Naive thymus-derived CD8-positive, alpha-beta T cell (primary cell): ENCODE measurements at regions of chr2 and their contacts with region 1.

Region 1: DNA sequence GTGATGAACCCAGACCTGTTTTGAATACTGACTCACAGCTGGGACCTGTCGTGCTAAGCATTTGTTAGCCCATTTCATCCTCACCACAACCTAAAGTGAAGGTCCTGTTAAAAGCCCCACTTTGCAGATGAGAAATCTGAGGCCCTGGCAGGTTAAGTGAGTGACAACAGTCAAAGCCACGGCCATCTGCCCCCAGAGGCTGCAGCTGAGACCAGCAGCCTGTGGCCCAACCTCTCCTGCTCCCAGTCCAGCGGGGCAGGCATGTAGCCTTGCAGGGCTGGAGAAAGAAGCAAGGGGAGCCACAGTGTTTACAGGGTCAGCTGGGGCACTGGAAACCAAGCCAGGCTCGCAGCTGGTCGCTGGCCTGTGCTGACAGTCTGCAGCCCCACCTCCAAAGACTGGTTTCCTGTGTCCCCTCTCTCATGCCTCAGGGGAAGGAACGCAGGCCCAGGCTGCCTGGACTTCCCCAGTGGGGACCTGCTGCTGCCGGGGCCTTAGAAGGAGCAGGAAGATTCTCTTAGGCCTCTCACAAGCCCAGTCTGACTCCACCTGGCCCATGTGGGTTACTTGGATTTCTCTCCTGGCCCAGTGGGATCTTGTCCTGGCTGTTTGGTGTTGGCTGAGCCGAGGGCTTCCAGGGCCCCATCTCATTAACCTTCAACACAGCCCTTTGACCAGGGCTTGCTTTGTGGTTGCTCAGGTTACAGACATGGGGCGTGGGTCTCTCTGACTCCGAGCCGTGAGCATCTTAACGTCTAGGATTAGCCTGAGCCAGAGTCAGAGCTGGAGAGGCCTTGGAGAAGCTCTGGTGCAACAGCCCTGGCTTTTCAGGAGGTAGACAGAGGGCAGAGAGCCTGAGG is 1.7 kb downstream of the INPP5D start:
- DNase-seq: peak in 1 of 10 donors; percentile 15
- ATAC-seq: peak in 1 of 2 donors; percentile 5
- H3K4me3 Mint-ChIP-seq: peak overlapping the region; percentile 89 to 99 (median 94)
- H3K27ac Mint-ChIP-seq: peak overlapping the region; percentile 92 to 99 (median 98)
- H3K4me1 Mint-ChIP-seq: peaks cover 31 to 63% (median 55%) of the 10 kb centered on the region in 4 donors
- H3K27me3 Mint-ChIP-seq: no peaks in the 10 kb centered on the region

Region 2: GRCh38 chr2:232871835-232872736 is 189.7 kb before region 1 on chr2:
- POLR2A ChIA-PET with region 1: no interaction called
- DNase-seq: peak in 1 of 10 donors; percentile 42
- ATAC-seq: no peak
- H3K4me3 Mint-ChIP-seq: no peak overlapping the region
- H3K27ac Mint-ChIP-seq: no peak overlapping the region
- H3K4me1 Mint-ChIP-seq: peaks cover 5 to 10% (median 6%) of the 10 kb centered on the region in 4 donors
- H3K27me3 Mint-ChIP-seq: peaks cover 2 to 20% (median 11%) of the 10 kb centered on the region in 5 donors

Region 3: GRCh38 chr2:233049194-233049761 is 12.5 kb before region 1 on chr2:
- POLR2A ChIA-PET with region 1: interaction called, 12 read pairs
- DNase-seq: peak in 1 of 10 donors; percentile 11
- ATAC-seq: peak in 1 of 2 donors; percentile 33
- H3K4me3 Mint-ChIP-seq: no peak overlapping the region
- H3K27ac Mint-ChIP-seq: peak overlapping the region in 2 of 10 donors; percentile 31 to 70
- H3K4me1 Mint-ChIP-seq: peaks cover 7 to 15% (median 14%) of the 10 kb centered on the region in 4 donors
- H3K27me3 Mint-ChIP-seq: peaks cover 0 to 4% (median 0%) of the 10 kb centered on the region in 5 donors

Region 4: GRCh38 chr2:233075966-233076339 is 14.1 kb after region 1 on chr2:
- POLR2A ChIA-PET with region 1: interaction called, 175 read pairs
- DNase-seq: peak in 5 of 10 donors; percentile 38 to 67 (median 63)
- ATAC-seq: peak; percentile 80 to 86
- H3K4me3 Mint-ChIP-seq: no peak overlapping the region
- H3K27ac Mint-ChIP-seq: no peak overlapping the region
- H3K4me1 Mint-ChIP-seq: peaks cover 22 to 49% (median 38%) of the 10 kb centered on the region in 4 donors
- H3K27me3 Mint-ChIP-seq: no peaks in the 10 kb centered on the region

Region 5: GRCh38 chr2:233100192-233100998 is 38.6 kb after region 1 on chr2:
- POLR2A ChIA-PET with region 1: interaction called, 40 read pairs
- DNase-seq: peak in 9 of 10 donors; percentile 50 to 87 (median 73)
- ATAC-seq: peak; percentile 85 to 95
- H3K4me3 Mint-ChIP-seq: peak overlapping the region; percentile 61 to 86 (median 79)
- H3K27ac Mint-ChIP-seq: peak overlapping the region; percentile 56 to 95 (median 84)
- H3K4me1 Mint-ChIP-seq: peaks cover 43 to 89% (median 77%) of the 10 kb centered on the region in 4 donors
- H3K27me3 Mint-ChIP-seq: no peaks in the 10 kb centered on the region

Region 6: DNA sequence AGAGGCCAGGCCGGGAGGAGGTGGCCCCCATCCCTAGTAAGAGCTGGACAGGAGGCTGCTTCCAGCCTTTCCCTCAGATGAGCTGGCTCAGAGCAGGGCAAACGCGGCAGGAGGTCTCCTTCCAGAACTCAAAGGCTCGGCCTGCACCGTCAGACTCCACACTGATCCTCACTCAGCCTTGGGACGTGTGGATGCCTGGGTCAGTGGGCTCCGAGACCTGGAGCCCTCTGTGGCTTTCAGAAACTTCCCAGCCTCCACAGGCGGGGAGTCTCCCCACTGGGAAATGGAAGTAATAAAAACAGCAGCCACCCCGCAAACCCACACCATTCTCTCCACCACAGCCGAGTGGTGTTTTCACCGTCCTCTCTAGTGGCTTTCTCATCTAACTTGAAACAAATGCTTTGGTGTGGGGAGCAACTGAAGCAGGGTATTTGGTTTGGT is 52.6 kb after region 1 on chr2:
- POLR2A ChIA-PET with region 1: interaction called, 16 read pairs
- DNase-seq: peak in 7 of 10 donors; percentile 19 to 74 (median 52)
- ATAC-seq: peak; percentile 89 to 96
- H3K4me3 Mint-ChIP-seq: peak overlapping the region; percentile 24 to 77 (median 60)
- H3K27ac Mint-ChIP-seq: peak overlapping the region in 9 of 10 donors; percentile 17 to 84 (median 69)
- H3K4me1 Mint-ChIP-seq: peaks cover 45 to 89% (median 79%) of the 10 kb centered on the region in 4 donors
- H3K27me3 Mint-ChIP-seq: no peaks in the 10 kb centered on the region

Region 7: DNA sequence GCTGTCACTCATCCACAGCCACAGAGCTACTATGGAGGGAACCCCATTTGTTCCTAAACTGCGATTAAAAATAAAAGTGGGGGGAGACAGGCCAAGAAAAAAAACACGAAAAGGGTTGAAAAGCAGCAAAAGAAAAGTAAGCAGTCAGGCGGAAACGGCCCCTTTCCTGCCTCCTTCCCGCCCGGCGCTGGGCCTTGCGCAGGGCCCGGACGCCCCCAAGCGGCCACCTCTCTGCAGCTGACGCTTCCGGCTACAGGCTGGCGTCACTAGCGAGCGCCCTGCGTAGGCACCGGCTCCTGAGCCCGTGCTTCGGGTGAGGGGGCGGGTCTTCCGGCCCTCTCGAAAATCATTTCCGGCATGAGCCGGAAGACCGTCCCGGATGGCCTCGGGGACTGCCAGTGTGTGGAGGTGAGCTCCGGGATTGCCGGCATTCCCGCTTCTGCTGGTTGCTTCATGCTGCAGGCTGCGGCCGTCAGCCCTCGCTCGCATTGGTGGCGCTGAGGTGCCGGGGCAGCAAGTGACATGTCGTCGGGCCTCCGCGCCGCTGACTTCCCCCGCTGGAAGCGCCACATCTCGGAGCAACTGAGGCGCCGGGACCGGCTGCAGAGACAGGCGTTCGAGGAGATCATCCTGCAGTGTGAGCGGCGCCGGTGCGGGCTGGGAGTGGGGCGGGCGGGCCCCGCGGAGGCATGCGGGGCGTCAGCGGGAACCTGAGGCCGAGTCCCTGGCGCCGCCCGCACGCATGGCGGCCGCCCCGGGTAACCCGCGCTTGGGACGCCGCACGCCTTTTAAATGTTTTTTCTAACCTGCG is 189.7 kb after region 1 on chr2 and contains the start of gene ATG16L1:
- POLR2A ChIA-PET with region 1: interaction called, 21 read pairs
- DNase-seq: peak; percentile 83 to 96 (median 95)
- ATAC-seq: peak; percentile 92 to 96
- H3K4me3 Mint-ChIP-seq: peak within 1 kb of the TSS; percentile 87 to 96 (median 92)
- H3K27ac Mint-ChIP-seq: peak within 1 kb of the TSS; percentile 90 to 98 (median 94)
- H3K4me1 Mint-ChIP-seq: peaks cover 32 to 82% (median 70%) of the 10 kb centered on the region in 4 donors
- H3K27me3 Mint-ChIP-seq: no peaks in the 10 kb centered on the region
- polyA plus RNA-seq, gene ATG16L1: 12.4 to 19.3 (median 15.7) TPM